ENCODE measurements at regions of chr1 and their contacts with region 1.

Region 1: GRCh38 chr1:160006312-160006940 is 25.4 kb downstream of the PIGM start:
- DNase-seq: peak; percentile 80 to 87
- ATAC-seq: peak; percentile 93 to 96
- H3K4me3 ChIP-seq: no peak overlapping the region
- H3K27ac ChIP-seq: no peak overlapping the region
- H3K4me1 ChIP-seq: no peaks in the 10 kb centered on the region
- CTCF ChIP-seq: peak; percentile 94
- EP300 ChIP-seq: no peak
- POLR2A ChIP-seq: no peak
- RAD21 ChIP-seq: peak; percentile 71 to 78

Region 2: DNA sequence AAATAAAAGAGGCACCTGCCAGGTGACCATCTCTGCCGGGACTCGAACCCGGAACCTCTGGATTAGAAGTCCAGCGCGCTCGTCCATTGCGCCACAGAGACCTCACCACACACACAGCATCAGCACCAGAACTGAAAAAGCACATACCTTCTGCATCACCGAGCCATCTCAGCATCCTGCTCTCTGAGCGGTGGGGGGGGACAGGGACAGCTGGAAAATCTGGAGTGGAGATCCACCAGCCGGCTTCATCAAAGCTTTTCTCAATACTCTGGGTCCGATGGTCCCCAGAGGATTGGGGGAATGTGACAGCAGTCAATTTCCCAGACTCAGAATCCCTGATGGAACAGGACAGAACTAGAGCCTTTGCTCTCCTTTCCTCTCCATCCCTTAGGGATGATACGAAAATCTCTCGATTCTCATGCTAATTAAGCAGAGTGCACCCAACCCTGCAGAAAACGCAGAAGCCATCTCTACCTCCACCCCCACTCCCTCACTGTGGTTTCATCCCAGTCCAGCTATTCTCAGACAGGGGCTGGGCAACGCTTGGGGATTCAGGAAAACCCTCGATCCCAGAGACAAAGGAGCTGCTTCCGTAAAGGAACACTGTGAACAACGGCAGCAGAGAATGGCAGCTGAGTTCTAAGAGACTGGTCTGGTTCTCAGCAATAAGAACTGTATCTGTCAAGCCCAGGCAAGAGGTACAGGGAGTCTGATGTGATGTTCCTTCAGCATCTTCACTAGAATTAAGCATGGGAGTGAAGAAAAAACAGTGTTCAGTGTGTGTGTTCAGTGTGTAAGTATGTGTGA is 864.6 kb before region 1 on chr1:
- CTCF ChIA-PET with region 1: interaction called, 11 read pairs
- POLR2A ChIA-PET with region 1: no interaction called
- DNase-seq: peak in 1 of 2 experiments; percentile 19
- ATAC-seq: peak; percentile 49 to 56; a peak in 5 of 6 replicates
- H3K4me3 ChIP-seq: peak overlapping the region; percentile 38
- H3K27ac ChIP-seq: no peak overlapping the region
- H3K4me1 ChIP-seq: no peaks in the 10 kb centered on the region
- CTCF ChIP-seq: no peak
- EP300 ChIP-seq: no peak
- POLR2A ChIP-seq: no peak
- RAD21 ChIP-seq: no peak

Region 3: DNA sequence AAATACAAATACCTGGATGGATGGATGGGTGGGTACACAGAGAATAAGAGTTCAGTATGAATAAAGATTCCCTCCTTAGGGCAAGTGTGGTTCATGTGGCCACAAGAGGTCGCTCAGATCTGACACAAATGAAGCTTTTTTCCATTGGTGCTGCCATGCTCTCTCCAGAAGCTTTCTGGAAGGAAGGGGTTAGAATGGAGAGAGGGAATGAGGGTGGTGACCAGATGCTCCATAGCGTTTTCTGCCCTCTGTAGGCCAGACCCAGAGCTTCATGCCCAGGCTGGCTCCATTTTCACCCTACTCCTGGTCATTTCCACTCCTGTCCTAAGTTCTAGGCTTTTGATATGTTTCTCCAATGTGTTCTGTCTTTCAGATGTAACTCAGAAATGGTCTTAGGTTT is 207.5 kb before region 1 on chr1:
- CTCF ChIA-PET with region 1: interaction called, 52 read pairs
- POLR2A ChIA-PET with region 1: no interaction called
- DNase-seq: peak; percentile 86 to 91
- ATAC-seq: peak; percentile 91 to 99
- H3K4me3 ChIP-seq: no peak overlapping the region
- H3K27ac ChIP-seq: no peak overlapping the region
- H3K4me1 ChIP-seq: no peaks in the 10 kb centered on the region
- CTCF ChIP-seq: peak; percentile 88
- EP300 ChIP-seq: no peak
- POLR2A ChIP-seq: no peak
- RAD21 ChIP-seq: peak; percentile 87

Region 4: GRCh38 chr1:159916184-159917051 is 90.0 kb before region 1 on chr1:
- CTCF ChIA-PET with region 1: interaction called, 665 read pairs
- POLR2A ChIA-PET with region 1: no interaction called
- DNase-seq: peak; percentile 94 to 95
- ATAC-seq: peak; percentile 75 to 86
- H3K4me3 ChIP-seq: no peak overlapping the region
- H3K27ac ChIP-seq: peak overlapping the region; percentile 76 to 87
- H3K4me1 ChIP-seq: peaks cover 92% of the 10 kb centered on the region
- CTCF ChIP-seq: no peak
- EP300 ChIP-seq: peak; percentile 78 to 84; a peak in 3 of 5 replicates
- POLR2A ChIP-seq: no peak
- RAD21 ChIP-seq: peak in 1 of 2 experiments; percentile 7; a peak in 1 of 5 replicates

Region 5: DNA sequence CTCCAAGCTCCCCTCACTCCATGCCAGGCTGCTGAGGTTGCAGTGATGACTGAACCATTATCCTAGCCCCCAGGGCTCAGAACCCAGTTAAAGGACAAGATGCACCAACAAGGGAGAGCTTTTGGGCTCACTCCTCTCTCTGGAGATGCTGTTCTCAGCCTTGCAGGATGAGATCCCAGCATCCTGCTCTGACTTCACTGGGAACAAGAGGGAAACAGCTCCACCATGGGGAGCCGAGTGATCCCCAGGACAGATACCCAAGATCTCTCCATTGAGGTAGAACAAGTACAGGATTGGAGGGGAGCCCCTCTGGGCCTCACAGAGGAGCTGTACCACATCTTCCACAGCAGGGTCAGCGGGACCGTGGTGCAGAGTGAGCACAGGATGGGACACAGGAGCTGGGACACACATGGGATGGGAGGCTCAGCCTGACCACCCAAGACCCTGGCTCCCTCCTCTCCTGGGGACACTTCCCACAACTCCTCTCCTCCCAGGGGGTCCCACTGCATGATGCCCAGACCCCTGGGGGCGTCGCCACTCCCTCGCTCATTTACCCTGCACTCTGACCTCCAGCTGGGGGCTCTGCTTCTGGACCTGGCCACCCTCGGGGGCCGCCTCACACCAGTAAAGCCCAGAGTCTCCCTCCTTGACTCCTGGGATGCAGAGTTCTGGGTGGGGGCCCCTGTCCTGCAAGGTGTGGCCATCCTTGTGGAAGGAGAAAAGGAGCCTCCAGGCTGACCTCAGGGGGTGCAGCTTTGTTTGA is 33.8 kb before region 1 on chr1:
- CTCF ChIA-PET with region 1: interaction called, 34 read pairs
- POLR2A ChIA-PET with region 1: no interaction called
- DNase-seq: no peak
- ATAC-seq: no peak
- H3K4me3 ChIP-seq: no peak overlapping the region
- H3K27ac ChIP-seq: no peak overlapping the region
- H3K4me1 ChIP-seq: peaks cover 14% of the 10 kb centered on the region
- CTCF ChIP-seq: no peak
- EP300 ChIP-seq: no peak
- POLR2A ChIP-seq: no peak
- RAD21 ChIP-seq: no peak

Region 6: DNA sequence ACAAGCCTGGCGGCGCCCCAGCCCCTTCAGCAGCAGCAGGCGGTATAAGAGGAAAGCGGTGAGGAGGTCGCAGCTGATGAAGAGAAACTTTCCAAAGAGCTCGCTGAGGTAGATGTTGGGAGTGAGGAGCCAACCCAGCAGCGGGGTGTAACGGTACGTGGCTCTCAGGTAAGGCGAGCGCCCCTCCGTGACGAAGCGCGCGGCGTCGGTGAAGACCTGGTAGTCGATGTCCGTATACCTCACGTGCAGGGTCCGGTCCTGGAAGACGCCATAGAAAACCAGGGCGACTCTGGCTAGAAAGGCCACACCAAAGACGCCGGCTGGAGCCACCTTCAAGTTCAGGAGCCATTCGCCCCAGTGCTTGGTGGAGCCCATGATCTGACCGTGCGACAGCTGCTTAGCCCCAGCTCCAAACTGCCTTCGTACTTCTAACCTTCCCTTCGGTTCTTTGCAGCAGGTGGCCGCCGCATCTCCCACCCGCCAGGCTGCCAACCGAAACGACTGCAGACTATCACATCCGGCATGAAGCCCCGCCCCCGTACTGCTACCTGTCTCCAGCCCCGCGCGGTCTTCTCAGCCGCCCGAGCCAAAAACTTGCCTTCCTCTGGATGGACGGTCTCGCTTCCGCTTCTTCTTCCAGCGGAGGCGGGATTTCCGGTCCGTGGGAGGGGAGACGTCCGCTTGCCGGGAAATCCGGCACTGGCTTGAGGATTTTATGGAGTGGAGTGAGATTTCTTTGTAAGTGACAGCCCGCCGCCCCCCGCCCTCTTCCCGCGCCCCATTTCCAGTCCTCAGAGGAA is 25.1 kb after region 1 on chr1 and contains the start of gene PIGM:
- CTCF ChIA-PET with region 1: interaction called, 35 read pairs
- POLR2A ChIA-PET with region 1: no interaction called
- DNase-seq: peak; percentile 91 to 96
- ATAC-seq: peak; percentile 96 to 98
- H3K4me3 ChIP-seq: peak within 1 kb of the TSS; percentile 95
- H3K27ac ChIP-seq: peak within 1 kb of the TSS; percentile 83 to 84
- H3K4me1 ChIP-seq: peaks cover 12% of the 10 kb centered on the region
- CTCF ChIP-seq: no peak
- EP300 ChIP-seq: no peak
- POLR2A ChIP-seq: peak; percentile 48
- RAD21 ChIP-seq: no peak
- polyA plus RNA-seq, gene PIGM: 6.3 and 7.2 TPM in 2 replicates

Region 7: GRCh38 chr1:160085686-160086455 is 79.4 kb after region 1 on chr1:
- CTCF ChIA-PET with region 1: interaction called, 30 read pairs
- POLR2A ChIA-PET with region 1: no interaction called
- DNase-seq: peak; percentile 83 to 94
- ATAC-seq: peak; percentile 72 to 88
- H3K4me3 ChIP-seq: no peak overlapping the region
- H3K27ac ChIP-seq: no peak overlapping the region
- H3K4me1 ChIP-seq: 0 out of 3 replicates have a peak, but pooled peaks cover 2% of the 10 kb centered on the region
- CTCF ChIP-seq: peak; percentile 82
- EP300 ChIP-seq: no peak
- POLR2A ChIP-seq: no peak
- RAD21 ChIP-seq: peak; percentile 70 to 72

Measured in A549 (cell line).